Heart left ventricle (tissue), 16 donors: ENCODE measurements at regions of chr11 and their contacts with region 1.

Region 1: GRCh38 chr11:93089474-93090102 is 108.2 kb downstream of the SLC36A4 start:
- DNase-seq: peak in 1 of 5 donors; percentile 24
- ATAC-seq: peak; percentile 28 to 85 (median 62)
- H3K4me3 ChIP-seq: no peak overlapping the region
- H3K27ac ChIP-seq: no peak overlapping the region
- H3K4me1 ChIP-seq: peaks cover 0 to 5% (median 0%) of the 10 kb centered on the region in 12 donors
- H3K27me3 ChIP-seq: no peaks in the 10 kb centered on the region
- CTCF ChIP-seq: peak in 9 of 12 donors; percentile 8 to 55 (median 30)
- POLR2A ChIP-seq: no peak

Region 2: DNA sequence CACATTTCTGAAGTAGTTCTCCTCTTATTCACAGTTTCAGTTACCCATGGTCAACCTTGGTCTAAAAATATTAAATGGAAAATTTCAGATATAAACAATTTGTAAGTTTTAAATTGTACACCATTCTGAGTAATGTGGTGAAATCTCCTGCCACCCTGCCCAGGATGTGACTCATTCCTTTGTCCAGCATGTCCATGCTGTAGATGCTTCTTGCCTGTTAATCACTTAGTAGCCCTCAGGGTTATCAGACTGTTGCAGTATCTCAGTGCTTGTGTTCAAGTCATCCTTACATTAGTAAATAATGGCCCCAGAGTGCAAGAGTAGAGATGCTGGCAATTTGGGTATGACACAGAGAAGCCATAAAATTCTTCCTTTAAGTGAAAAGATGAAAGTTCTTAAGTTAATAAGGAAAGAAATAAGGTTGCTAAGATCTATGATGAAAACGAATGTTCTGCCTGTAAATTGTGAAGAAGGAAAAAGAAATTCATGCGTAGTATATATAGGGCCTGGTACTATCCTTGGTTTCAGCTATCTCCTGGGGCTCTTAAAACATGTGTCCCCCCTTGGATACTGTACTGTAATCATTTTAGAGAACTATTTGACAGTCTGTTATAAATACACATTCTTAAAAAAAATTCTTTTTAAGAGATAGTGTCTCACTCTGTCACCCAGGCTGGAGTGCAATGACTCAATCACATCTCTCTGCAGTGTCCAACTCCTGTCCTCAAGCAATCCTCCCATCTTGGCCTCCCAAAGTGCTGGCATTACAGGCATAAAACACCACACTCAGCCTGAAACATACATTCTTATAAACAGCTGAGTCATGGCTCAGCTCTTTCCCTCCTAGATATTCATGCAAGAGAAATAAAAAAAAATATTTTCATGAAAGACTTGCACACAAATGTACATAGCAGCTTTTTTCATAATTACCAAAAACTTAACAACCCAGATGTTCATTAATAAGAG is 88.8 kb before region 1 on chr11:
- intact Hi-C with region 1: loop called in 1 of 10 experiments (anchors 10 kb)
- DNase-seq: no peak
- ATAC-seq: no peak
- H3K4me3 ChIP-seq: no peak overlapping the region
- H3K27ac ChIP-seq: no peak overlapping the region
- H3K4me1 ChIP-seq: no peaks in the 10 kb centered on the region
- H3K27me3 ChIP-seq: no peaks in the 10 kb centered on the region
- CTCF ChIP-seq: no peak
- POLR2A ChIP-seq: no peak

Region 3: DNA sequence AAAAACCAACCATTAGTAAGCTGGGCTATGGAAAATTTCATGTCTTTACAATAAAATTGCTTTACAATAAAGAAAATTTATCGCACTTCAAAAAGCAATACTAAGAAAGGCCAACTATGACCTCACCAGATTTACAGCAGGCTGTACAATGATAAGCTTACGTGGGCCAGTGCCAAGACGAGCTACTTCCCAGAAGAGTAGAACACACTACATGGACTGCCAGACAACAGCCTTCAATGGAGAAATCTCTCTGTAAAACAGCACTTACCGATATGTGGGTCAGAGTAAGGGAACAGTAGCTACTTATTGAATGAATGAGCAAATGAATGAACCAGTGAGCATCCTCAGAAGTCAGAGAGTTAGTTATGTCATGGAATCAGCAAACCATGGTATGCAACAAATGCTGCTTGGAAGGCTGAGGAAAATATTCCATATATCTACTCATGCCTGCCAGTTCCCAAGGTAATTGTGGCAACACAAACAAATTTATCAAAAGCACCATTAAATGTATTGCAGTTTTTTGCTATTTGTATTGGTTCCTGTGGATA is 33.8 kb after region 1 on chr11:
- intact Hi-C with region 1: no loop called
- DNase-seq: peak in 4 of 5 donors; percentile 39 to 67 (median 56)
- ATAC-seq: peak; percentile 67 to 90 (median 82)
- H3K4me3 ChIP-seq: no peak overlapping the region
- H3K27ac ChIP-seq: no peak overlapping the region
- H3K4me1 ChIP-seq: peaks cover 0 to 11% (median 0%) of the 10 kb centered on the region in 12 donors
- H3K27me3 ChIP-seq: peaks cover 0 to 14% (median 0%) of the 10 kb centered on the region in 9 donors
- CTCF ChIP-seq: no peak
- POLR2A ChIP-seq: no peak